ENCODE measurements at regions of chr9 and their contacts with region 1.

Region 1: GRCh38 chr9:35732122-35732799 is at the starts of genes CREB3 and TLN1:
- DNase-seq: peak; percentile 99 to 100
- H3K4me3 ChIP-seq: peak within 1 kb of the TSS; percentile 65 to 93
- H3K27ac ChIP-seq: peak within 1 kb of the TSS; percentile 92 to 99
- H3K4me1 ChIP-seq: peaks cover 0 to 68% (median 50%) of the 10 kb centered on the region in 4 donors
- H3K27me3 ChIP-seq: no peaks in the 10 kb centered on the region
- CTCF ChIP-seq: no peak

Region 2: GRCh38 chr9:35657546-35658136 is 74.6 kb before region 1 on chr9 and contains the start of gene RMRP:
- intact Hi-C with region 1: loop called (anchors 1 kb)
- DNase-seq: peak; percentile 94 to 99
- H3K4me3 ChIP-seq: peak within 1 kb of the TSS; percentile 87 to 99
- H3K27ac ChIP-seq: peak within 1 kb of the TSS; percentile 99 to 100
- H3K4me1 ChIP-seq: peaks cover 0 to 42% (median 21%) of the 10 kb centered on the region in 4 donors
- H3K27me3 ChIP-seq: no peaks in the 10 kb centered on the region
- CTCF ChIP-seq: peak; percentile 34 to 50

Region 3: DNA sequence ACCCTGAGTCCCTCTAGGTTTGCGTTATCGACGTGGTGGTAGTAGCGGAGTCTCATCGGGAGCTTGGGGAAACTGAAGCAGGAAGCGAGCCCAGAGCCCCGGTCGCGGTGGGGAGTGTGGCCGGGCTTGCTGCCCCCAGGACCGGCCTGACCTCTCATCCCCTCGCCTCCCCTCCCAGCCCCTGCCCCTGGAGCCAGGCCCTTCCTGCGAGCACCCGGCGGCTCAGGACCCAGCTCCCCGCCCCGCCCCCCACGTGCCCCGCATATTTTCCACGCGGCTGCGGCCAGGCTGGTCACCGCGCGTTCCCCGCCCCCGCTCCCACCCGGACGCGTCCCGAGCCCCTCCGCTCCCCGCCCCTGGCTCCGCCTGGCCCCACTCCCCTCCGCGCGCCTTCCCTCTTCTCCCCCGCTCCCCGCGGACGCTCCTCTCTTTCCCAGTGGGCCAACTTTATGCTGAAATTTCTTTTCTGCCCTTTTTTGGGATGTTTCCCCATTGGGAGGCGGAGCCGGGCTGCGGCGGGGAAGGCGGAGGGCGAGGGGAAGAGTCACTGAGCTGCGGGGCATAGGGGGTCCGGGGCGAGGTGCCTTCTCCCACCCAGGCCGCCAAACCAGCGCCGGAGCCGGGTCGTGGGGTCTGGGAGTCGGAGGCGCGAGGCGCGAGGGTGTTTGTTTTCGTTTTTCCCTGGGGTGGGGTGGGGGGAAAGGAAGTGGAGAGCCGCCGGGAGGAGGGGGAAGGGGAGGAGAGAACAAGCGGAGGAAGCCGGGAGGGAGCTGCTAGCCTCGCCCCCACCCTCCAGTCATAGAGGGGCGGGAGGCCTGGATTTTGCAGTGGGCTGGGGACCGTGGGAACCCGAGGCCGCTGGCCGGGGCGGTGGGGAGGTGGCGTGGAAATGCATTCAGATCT is 41.6 kb before region 1 on chr9:
- intact Hi-C with region 1: loop called (anchors 5 kb)
- DNase-seq: peak; percentile 80 to 96
- H3K4me3 ChIP-seq: peak overlapping the region; percentile 93 to 94
- H3K27ac ChIP-seq: peak overlapping the region; percentile 96 to 97
- H3K4me1 ChIP-seq: peaks cover 0 to 52% (median 16%) of the 10 kb centered on the region in 4 donors
- H3K27me3 ChIP-seq: no peaks in the 10 kb centered on the region
- CTCF ChIP-seq: no peak

Region 4: GRCh38 chr9:35748858-35749514 is 16.7 kb after region 1 on chr9 and contains the starts of genes GBA2 and RGP1:
- intact Hi-C with region 1: no loop called
- DNase-seq: peak; percentile 71 to 90
- H3K4me3 ChIP-seq: peak within 1 kb of the TSS; percentile 62 to 91
- H3K27ac ChIP-seq: peak within 1 kb of the TSS; percentile 79 to 91
- H3K4me1 ChIP-seq: peaks cover 0 to 56% (median 47%) of the 10 kb centered on the region in 4 donors
- H3K27me3 ChIP-seq: no peaks in the 10 kb centered on the region
- CTCF ChIP-seq: no peak